OCI-LY7 (cell line): ENCODE measurements at regions of chr14 and their contacts with region 1.

Region 1: DNA sequence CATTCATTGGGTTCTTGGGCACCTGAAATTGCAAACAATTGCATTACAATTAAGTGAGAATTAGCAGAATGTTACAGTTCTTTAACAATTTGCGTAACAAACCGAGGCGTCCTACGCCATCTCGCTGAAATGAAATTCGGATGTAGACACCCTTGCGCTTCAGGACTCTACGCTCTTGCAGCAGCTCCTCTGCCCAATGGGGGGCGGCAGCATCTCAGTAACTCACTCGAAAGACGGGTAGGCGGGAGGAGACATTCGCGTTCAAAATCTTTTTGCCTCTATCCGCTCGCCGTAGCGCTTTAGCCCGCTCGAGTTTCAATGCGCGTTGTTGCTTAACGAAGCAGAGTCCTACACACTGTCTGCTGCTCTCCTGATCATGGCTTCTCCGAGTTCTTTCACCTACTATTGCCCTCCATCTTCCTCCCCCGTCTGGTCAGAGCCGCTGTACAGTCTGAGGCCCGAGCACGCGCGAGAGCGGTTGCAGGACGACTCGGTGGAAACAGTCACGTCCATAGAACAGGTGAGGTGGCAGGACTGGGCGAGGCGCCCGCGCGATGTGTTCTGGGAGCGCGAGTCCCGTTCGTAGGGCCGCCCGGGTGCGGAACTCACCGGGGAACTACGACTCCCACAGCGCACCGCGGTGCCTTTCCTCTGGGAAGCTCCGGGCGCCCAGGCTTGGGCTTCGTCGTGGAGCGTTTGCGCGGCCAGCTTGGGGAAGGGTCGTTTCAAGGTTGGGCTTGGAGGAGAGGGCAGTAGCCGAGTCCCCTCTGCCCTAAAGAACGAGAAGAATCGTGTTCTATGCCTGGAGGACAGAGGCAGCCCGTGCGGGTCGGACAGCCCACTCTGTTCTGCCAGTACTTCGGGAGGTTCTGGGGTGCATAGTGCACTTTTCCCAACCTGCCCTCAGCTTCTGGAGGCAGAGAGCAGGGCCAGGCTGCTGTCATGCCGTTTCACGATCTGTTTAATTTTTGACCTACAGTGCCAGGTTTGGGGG is at the start of gene FNTB:
- DNase-seq: peak; percentile 97
- H3K4me3 ChIP-seq: peak within 1 kb of the TSS; percentile 82
- H3K27ac ChIP-seq: peak within 1 kb of the TSS; percentile 60
- H3K4me1 ChIP-seq: peaks cover 19% of the 10 kb centered on the region
- CTCF ChIP-seq: peak; percentile 86
- total RNA-seq, gene FNTB: 6.3 and 9.2 TPM in 2 replicates

Region 2: DNA sequence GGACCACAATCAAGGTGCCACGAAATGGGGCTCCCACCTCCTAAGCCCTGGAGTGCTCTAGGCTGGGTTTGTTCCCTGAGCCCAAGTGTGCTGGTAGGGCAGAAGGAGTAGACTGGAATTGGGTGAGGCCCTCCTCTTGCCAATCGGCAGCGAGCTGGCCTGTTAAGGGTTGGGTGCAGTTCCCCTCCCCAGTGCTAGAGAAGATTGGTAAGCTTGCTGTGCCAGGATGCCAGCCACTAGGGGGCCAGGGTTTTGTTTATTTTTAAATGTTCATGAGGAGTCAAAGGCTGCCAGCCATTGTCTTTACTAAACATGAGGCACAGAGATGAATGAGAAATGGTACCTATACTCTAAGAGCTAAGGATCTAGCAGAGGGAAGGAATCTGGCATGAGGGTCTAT is 186.9 kb before region 1 on chr14:
- CTCF ChIA-PET with region 1: no interaction called
- POLR2A ChIA-PET with region 1: no interaction called
- intact Hi-C with region 1: loop called (anchors 5 kb)
- DNase-seq: peak; percentile 7
- H3K4me3 ChIP-seq: no peak overlapping the region
- H3K27ac ChIP-seq: no peak overlapping the region
- H3K4me1 ChIP-seq: no peaks in the 10 kb centered on the region
- CTCF ChIP-seq: peak; percentile 65

Region 3: GRCh38 chr14:64823305-64823861 is 163.5 kb before region 1 on chr14:
- CTCF ChIA-PET with region 1: no interaction called
- POLR2A ChIA-PET with region 1: no interaction called
- intact Hi-C with region 1: loop called (anchors 1 kb)
- DNase-seq: peak; percentile 60
- H3K4me3 ChIP-seq: no peak overlapping the region
- H3K27ac ChIP-seq: no peak overlapping the region
- H3K4me1 ChIP-seq: no peaks in the 10 kb centered on the region
- CTCF ChIP-seq: peak; percentile 77

Region 4: DNA sequence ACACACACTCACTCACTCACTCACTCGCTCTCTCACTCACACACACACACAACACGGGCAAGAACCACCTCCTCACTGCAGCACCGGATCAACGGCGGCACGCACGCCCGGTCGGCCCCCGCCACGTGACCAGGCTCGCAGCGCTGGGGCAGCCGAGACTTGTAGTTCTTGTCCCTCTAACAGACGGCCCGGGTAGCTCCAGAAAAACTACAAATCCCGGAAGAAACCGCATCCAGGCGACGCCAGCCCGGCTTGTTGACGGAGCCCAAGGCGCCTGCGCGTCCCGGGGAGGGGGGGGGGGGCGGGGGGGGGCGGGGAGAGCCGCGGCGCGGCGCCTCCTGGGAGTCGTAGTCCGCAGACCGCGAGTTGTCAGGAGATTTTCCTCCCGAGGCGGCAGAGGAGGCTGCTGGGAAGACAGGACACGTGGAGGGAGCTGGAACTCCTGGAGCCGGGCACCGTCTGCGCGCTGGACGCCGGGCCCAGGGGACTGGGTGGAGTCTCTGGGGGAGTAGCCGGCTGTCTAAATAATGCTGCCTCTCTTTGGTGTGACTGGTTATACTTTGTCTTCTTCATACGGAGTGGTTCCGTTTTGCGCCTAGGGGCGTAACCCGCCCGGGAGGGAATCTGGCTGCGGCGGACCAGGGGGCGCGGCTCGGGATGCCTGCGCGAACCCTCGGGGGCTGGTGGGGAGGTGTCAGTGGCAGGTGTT is 115.7 kb after region 1 on chr14 and contains the start of gene MAX:
- CTCF ChIA-PET with region 1: no interaction called
- POLR2A ChIA-PET with region 1: interaction called, 3 read pairs
- intact Hi-C with region 1: loop called (anchors 2 kb)
- DNase-seq: peak; percentile 99
- H3K4me3 ChIP-seq: peak within 1 kb of the TSS; percentile 99
- H3K27ac ChIP-seq: peak within 1 kb of the TSS; percentile 63
- H3K4me1 ChIP-seq: peaks cover 32% of the 10 kb centered on the region
- CTCF ChIP-seq: no peak
- total RNA-seq, gene MAX: 49.1 and 58.3 TPM in 2 replicates

Region 5: DNA sequence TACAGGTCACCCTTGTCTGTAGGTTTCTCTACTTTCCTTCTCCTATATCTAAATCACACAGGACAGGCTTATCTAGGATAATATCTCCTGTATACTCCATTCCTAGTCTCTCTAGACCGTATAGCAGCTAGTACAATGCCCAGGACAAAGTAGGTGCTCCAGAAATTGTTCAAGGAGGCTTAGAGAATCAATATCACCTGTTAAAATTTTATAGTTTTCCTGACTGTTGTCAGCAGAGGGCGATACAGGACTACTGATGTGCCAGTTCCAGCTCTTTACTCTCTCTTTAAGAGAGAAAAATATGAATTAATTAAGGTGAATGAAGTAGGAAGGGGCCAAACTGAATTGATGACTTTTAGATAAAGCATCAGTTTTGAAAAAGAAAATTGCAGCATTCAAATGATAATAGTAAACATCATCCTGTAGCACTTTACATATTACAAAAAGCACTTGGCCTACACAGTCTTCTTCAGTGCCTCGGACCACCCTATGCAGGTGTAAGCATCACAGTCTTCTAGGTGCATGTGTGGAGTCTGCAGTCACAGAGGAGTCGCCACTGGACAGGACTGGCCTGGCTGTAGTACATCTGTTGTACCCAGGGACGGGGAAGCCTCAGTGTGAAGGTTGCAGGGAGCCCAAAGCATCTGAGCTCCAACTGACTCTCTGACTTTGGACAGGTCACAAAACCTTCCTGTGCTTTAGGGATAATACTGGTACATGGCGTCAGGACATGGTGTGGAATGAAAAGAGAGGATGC is 177.4 kb after region 1 on chr14:
- CTCF ChIA-PET with region 1: no interaction called
- POLR2A ChIA-PET with region 1: no interaction called
- intact Hi-C with region 1: loop called (anchors 2 kb)
- DNase-seq: peak; percentile 79
- H3K4me3 ChIP-seq: no peak overlapping the region
- H3K27ac ChIP-seq: peak overlapping the region; percentile 17
- H3K4me1 ChIP-seq: peaks cover 53% of the 10 kb centered on the region
- CTCF ChIP-seq: peak; percentile 99

Region 6: DNA sequence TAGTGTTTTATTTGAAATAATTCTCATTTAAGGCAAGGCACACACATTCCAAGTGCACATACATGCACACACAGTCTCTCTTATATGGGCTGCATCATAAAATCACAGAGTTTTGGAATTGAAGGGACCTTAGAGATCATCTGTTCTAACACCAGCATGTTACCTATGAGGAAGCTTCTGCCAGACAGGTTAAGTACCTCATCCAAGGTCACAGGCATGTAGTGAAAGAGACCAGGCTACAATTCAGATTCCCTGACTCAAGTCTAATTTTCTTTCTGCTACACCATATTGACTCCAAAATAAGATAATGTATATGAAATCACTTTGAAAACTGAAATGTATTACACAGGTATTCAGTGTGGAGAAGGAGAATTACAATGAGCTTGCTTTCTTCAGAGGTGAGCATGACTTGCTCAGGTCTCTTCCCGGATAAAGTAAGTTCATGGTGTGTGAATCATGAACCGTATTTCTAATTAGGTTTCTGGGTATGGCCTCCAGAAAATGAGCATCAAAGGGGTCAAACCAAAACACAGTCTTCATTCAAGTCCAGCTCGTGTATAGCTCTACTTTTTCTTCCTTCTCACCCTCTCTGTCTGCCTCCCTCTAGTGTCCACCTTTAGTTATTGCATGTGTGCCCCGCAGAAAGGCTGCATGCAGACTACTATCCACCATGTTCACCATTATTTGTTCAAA is 837.6 kb after region 1 on chr14:
- CTCF ChIA-PET with region 1: no interaction called
- POLR2A ChIA-PET with region 1: no interaction called
- intact Hi-C with region 1: loop called (anchors 10 kb)
- DNase-seq: peak; percentile 72
- H3K4me3 ChIP-seq: no peak overlapping the region
- H3K27ac ChIP-seq: no peak overlapping the region
- H3K4me1 ChIP-seq: no peaks in the 10 kb centered on the region
- CTCF ChIP-seq: peak; percentile 97